Heart left ventricle (tissue), 16 donors: ENCODE measurements at regions of chr10 and their contacts with region 1.

Region 1: DNA sequence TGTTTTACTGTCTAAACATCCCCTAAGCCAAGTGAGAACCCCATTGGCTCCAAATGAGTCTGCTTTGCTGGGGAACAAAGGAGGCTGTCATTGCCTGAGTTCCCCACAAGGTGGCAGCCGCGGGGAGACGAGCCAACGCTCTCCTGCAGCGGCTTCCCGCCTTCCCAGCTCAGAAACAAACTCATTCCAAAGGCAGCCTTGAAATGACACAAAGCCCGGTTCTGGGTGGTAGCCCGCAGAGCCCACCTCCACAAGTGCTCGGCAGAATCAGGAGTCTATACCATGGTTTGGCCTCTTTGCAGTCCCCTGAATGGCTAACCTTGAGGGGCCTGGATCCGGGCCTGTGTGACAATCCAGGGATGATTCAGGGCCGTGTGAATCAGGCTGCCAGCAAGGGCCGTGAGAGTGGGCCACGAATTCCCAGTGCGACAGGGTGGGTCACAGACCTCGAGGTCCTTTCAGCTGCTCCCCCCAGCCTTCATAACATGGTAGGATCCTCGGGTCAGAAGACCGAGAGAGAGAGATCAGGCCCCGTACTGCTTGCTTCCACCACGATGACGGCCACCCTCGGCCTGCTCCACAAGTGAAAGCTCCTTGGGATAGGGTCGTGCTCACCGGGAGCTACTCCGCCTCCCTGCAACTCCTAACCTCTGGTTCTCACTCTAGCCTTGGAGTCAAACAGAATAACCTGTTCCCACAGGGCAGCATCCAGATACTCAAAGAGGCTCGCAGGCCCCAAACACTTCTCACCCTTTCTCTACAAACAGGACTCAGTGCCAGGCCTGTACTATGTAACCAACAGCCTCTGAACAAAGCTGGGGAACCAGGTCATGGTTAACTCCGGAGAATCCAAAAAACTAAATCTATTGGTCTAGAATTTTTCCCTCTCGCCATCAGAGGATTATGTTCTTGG is 79.6 kb downstream of the DLG5 start:
- DNase-seq: peak; percentile 65 to 85 (median 74)
- ATAC-seq: peak; percentile 39 to 84 (median 78)
- H3K4me3 ChIP-seq: peak overlapping the region in 2 of 12 donors; percentile 2 to 5
- H3K27ac ChIP-seq: peak overlapping the region in 8 of 12 donors; percentile 3 to 83 (median 30)
- H3K4me1 ChIP-seq: peaks cover 0 to 16% (median 8%) of the 10 kb centered on the region in 12 donors
- H3K27me3 ChIP-seq: no peaks in the 10 kb centered on the region
- CTCF ChIP-seq: peak; percentile 92 to 98 (median 96)
- POLR2A ChIP-seq: no peak

Region 2: DNA sequence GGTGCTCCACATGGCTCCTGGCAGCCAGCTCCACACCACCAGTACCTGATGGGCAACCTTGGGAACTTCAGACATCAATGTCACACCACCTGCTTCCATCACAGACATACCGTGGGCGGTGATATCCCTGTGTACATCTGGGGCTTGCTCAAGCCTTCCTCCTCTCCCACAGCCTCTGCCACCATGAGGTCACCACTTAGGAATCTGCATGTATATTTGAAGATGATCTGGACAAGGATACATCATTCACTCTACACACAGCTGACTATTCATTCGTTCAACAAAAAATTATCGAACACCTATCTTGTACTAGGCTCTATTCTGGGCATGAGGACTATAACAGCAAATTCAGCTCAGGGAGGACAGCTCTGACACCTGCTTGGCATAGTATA is 72.7 kb after region 1 on chr10:
- intact Hi-C with region 1: loop called in 2 of 10 experiments (anchors 2 to 5 kb)
- DNase-seq: no peak
- ATAC-seq: peak in 1 of 4 donors; percentile 24
- H3K4me3 ChIP-seq: no peak overlapping the region
- H3K27ac ChIP-seq: no peak overlapping the region
- H3K4me1 ChIP-seq: peaks cover 0 to 26% (median 7%) of the 10 kb centered on the region in 12 donors
- H3K27me3 ChIP-seq: no peaks in the 10 kb centered on the region
- CTCF ChIP-seq: no peak
- POLR2A ChIP-seq: no peak

Region 3: GRCh38 chr10:77970869-77971803 is 124.2 kb after region 1 on chr10:
- intact Hi-C with region 1: loop called in 7 of 10 experiments (anchors 2 to 10 kb)
- DNase-seq: peak in 4 of 5 donors; percentile 75 to 83 (median 79)
- ATAC-seq: peak; percentile 88 to 97 (median 93)
- H3K4me3 ChIP-seq: peak overlapping the region in 2 of 12 donors; percentile 25
- H3K27ac ChIP-seq: peak overlapping the region in 11 of 12 donors; percentile 2 to 88 (median 70)
- H3K4me1 ChIP-seq: peaks cover 0 to 18% (median 12%) of the 10 kb centered on the region in 12 donors
- H3K27me3 ChIP-seq: no peaks in the 10 kb centered on the region
- CTCF ChIP-seq: no peak
- POLR2A ChIP-seq: no peak

Region 4: DNA sequence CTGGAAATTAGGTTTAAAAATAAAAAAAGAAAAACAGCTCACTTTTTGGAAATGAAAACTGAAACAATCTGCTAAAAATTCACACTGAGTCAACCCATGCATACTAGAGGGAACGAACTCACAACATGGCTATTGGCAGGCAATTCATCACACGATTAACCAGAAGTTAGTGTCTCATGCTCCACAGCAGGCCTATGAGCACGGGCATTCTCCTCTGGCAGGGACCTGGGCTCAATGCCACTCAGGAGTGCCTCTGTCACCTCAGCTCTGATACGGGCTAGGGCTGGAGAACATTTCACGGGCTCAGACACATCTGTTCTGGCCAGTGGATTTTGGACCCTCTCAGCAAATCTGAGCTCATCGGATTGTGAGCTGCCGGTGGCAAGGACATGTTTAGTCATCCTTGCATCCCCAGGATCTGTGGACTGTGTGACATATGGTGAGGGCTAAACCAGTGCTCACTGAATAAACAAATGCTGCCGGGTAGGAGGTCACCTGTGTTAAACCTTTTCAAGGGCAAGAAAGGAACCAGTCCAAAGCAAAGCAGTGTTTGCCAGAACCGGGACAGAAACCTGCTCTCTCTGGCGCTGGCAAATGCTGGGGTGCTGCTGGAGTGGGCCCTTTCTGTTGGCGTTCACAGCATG is 142.2 kb after region 1 on chr10:
- intact Hi-C with region 1: loop called in 4 of 10 experiments (anchors 5 kb)
- DNase-seq: peak; percentile 49 to 83 (median 68)
- ATAC-seq: peak; percentile 96 to 98 (median 98)
- H3K4me3 ChIP-seq: no peak overlapping the region
- H3K27ac ChIP-seq: peak overlapping the region; percentile 27 to 73 (median 58)
- H3K4me1 ChIP-seq: peaks cover 0 to 18% (median 3%) of the 10 kb centered on the region in 12 donors
- H3K27me3 ChIP-seq: no peaks in the 10 kb centered on the region
- CTCF ChIP-seq: no peak
- POLR2A ChIP-seq: no peak

Region 5: DNA sequence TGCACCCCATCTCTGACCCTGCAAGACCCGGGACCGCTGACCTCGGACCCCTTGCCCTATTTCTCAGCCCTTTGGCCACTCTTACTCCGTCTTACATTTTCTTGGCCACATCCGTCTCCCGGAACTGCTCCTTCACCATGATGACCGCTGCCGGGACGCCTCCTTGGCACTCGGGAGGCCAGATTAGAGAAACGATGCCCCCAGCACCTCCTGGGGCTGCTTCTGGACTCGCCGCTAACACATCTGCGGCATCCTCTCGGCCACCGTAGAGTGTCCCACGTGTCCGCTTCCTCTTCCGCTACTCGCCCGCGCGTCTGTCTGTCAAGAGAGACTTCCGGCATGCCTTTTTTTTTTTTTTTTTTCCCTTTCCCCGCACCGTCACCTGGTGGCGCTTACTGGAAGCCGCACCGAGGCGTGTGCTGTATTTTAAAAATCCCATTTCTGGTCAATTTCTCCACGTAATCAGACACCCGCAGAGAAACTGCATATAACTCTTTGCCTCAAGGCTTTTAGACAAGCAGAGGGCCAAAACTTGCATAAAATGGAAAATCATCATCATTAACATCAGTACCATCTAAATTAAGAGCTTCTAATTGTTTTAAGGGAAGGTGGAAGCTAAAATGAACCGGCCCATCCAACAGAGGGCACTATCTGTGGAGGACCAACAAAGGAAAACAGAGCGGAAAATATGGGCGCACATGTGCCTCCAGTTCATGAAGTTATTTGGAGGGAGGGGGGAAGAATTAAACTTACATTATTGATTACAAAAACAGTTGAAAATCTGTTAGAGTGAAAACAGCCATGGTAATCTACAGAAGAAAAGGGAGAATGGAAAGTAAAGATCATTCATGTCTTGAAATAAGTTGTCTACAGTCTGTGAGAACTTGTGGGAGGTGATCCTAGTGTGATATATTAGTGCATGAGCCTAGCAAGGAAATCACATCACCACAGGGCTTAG is 182.6 kb after region 1 on chr10 and contains the start of gene POLR3A:
- intact Hi-C with region 1: loop called in 2 of 10 experiments (anchors 5 to 10 kb)
- DNase-seq: peak; percentile 96 to 99 (median 97)
- ATAC-seq: peak; percentile 68 to 82 (median 76)
- H3K4me3 ChIP-seq: peak within 1 kb of the TSS; percentile 59 to 99 (median 88)
- H3K27ac ChIP-seq: peak within 1 kb of the TSS; percentile 46 to 90 (median 80)
- H3K4me1 ChIP-seq: peaks cover 3 to 29% (median 18%) of the 10 kb centered on the region in 12 donors
- H3K27me3 ChIP-seq: no peaks in the 10 kb centered on the region
- CTCF ChIP-seq: peak; percentile 49 to 86 (median 66)
- POLR2A ChIP-seq: peak in 1 of 2 donors; percentile 40
- total RNA-seq, gene POLR3A: 7.9 to 12.9 (median 9.6) TPM